ENCODE measurements at regions of chr1 and their contacts with region 1.

Region 1: GRCh38 chr1:151024540-151025146 is 11.7 kb upstream of the BNIPL start:
- H3K4me3 Mint-ChIP-seq: no peak overlapping the region
- H3K27ac Mint-ChIP-seq: no peak overlapping the region
- H3K4me1 Mint-ChIP-seq: peaks cover 7% of the 10 kb centered on the region
- H3K27me3 Mint-ChIP-seq: no peaks in the 10 kb centered on the region

Region 2: GRCh38 chr1:151059078-151059907 is 34.6 kb after region 1 on chr1 and contains the start of gene CDC42SE1:
- intact Hi-C with region 1: loop called (anchors 5 kb)
- H3K4me3 Mint-ChIP-seq: peak within 1 kb of the TSS; percentile 86
- H3K27ac Mint-ChIP-seq: peak within 1 kb of the TSS; percentile 95
- H3K4me1 Mint-ChIP-seq: peaks cover 57% of the 10 kb centered on the region
- H3K27me3 Mint-ChIP-seq: no peaks in the 10 kb centered on the region

Region 3: DNA sequence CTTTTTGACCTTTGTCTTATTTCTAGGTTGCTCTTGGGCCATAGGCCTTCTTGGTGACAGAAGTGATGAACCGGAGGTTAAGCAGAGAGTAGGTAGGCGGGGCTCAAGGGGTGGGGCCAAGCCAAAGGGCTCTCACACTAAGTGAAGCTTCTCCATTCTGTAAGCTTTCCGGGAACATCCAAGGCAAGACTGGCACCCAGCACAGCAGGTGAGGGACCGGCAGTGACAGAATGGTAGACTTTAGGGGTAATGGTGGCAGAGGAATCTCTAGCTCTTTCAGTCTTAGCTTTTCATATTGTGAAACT is 131.8 kb after region 1 on chr1 and contains the start of gene TNFAIP8L2:
- intact Hi-C with region 1: loop called (anchors 5 kb)
- H3K4me3 Mint-ChIP-seq: peak within 1 kb of the TSS; percentile 87
- H3K27ac Mint-ChIP-seq: peak within 1 kb of the TSS; percentile 88
- H3K4me1 Mint-ChIP-seq: peaks cover 35% of the 10 kb centered on the region
- H3K27me3 Mint-ChIP-seq: no peaks in the 10 kb centered on the region

Measured in dendritic cell treated with granulocyte-macrophage colony-stimulating factor and Interleukin-4, amounts not matched to agents 40 ng/mL and 50 ng/mL, for 4 days (primary cell).